ENCODE measurements at regions of chr15 and their contacts with region 1.

Region 1: GRCh38 chr15:86231864-86232721 is 152.4 kb downstream of the AGBL1 start:
- DNase-seq: peak; percentile 57
- H3K4me3 Mint-ChIP-seq: no peak overlapping the region
- H3K27ac Mint-ChIP-seq: no peak overlapping the region
- H3K4me1 Mint-ChIP-seq: no peaks in the 10 kb centered on the region
- H3K27me3 Mint-ChIP-seq: no peaks in the 10 kb centered on the region
- CTCF ChIP-seq: peak; percentile 82

Region 2: DNA sequence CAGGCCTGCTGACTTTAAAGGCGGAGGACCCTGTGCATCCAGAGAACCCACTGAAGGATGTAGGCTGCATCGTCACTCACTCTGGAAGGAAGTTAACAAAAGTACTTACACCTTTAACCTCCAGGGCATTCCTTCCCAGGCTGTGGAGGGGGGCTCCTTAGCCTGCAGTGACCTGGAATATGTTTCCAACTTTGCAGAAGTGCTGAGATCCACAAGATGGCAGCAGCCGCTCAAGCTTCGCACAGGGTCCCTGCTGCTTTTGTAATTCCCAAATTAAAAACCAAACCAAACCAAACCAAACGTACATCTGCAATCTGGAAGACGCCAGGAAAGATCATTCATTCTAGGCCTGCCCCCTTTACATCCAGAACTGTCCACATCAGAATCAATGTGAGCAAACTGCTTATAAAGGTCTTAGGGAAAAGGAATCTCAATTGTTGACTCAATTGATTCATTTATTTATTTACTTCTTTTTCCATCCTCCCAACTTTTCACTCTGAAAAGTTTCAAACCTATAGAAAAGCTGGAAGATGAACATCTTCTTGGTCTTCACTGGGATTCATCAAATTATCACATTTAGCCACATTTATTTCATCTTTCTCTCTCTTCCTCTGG is 366.9 kb before region 1 on chr15:
- CTCF ChIA-PET with region 1: interaction called, 10 read pairs
- POLR2A ChIA-PET with region 1: no interaction called
- intact Hi-C with region 1: loop called (anchors 2 kb)
- DNase-seq: peak; percentile 46
- H3K4me3 Mint-ChIP-seq: no peak overlapping the region
- H3K27ac Mint-ChIP-seq: no peak overlapping the region
- H3K4me1 Mint-ChIP-seq: no peaks in the 10 kb centered on the region
- H3K27me3 Mint-ChIP-seq: peaks cover 41% of the 10 kb centered on the region
- CTCF ChIP-seq: peak; percentile 81

Region 3: GRCh38 chr15:86611417-86612040 is 379.4 kb after region 1 on chr15:
- CTCF ChIA-PET with region 1: interaction called, 12 read pairs
- POLR2A ChIA-PET with region 1: no interaction called
- intact Hi-C with region 1: no loop called
- DNase-seq: peak; percentile 70
- H3K4me3 Mint-ChIP-seq: peak overlapping the region; percentile 18
- H3K27ac Mint-ChIP-seq: peak overlapping the region; percentile 74
- H3K4me1 Mint-ChIP-seq: peaks cover 25% of the 10 kb centered on the region
- H3K27me3 Mint-ChIP-seq: no peaks in the 10 kb centered on the region
- CTCF ChIP-seq: no peak

Region 4: GRCh38 chr15:86756692-86757091 is 524.6 kb after region 1 on chr15:
- CTCF ChIA-PET with region 1: interaction called, 39 read pairs
- POLR2A ChIA-PET with region 1: no interaction called
- intact Hi-C with region 1: loop called (anchors 1 kb)
- DNase-seq: no peak
- H3K4me3 Mint-ChIP-seq: no peak overlapping the region
- H3K27ac Mint-ChIP-seq: no peak overlapping the region
- H3K4me1 Mint-ChIP-seq: no peaks in the 10 kb centered on the region
- H3K27me3 Mint-ChIP-seq: no peaks in the 10 kb centered on the region
- CTCF ChIP-seq: peak; percentile 23